SK-N-SH (cell line): ENCODE measurements at regions of chr11 and their contacts with region 1.

Region 1: DNA sequence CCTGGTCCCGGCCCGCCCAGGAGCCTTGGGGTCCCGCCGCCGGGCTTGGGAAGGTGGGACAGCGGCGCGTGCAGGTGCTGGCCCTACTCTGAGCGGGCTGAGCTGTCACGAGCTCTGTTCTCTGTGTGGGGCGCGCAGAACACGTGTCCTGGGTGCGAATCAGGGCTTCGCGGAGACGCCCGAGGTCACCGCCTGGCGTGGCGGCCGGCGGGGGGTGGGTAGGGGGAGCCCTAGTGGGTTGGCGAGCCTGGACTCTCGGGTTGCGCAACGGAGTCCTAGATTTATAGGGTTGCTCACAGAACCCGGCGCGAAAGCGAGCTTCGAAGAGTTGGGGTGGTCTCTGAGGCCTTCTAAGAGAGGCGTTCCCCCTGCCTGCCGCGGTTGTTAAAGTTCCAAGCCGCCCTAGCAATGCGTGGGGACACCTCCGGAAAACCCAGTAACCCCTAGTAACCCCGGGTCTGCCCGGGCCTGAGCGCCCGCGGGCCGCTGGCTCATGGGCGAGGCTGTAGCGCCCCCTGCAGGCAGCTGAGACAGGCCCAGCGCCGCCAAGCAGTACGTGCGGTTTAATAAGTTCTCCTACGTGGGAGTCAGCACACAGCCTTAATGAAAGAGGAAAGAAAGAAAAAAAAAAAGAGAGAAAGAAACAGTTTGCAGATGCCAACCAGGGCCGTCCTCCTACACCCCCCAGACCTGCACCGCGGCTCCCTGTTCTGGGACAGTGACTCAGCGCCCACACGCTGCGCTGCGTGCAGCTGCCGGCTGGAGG is 2.8 kb downstream of the ADM start:
- DNase-seq: peak; percentile 91
- H3K4me3 ChIP-seq: peak overlapping the region; percentile 66 to 87
- H3K27ac ChIP-seq: peak overlapping the region; percentile 75 to 79
- H3K4me1 ChIP-seq: peaks cover 7 to 39% of the 10 kb centered on the region in 2 experiments
- H3K27me3 ChIP-seq: no peaks in the 10 kb centered on the region
- CTCF ChIP-seq: peak; percentile 100
- EP300 ChIP-seq: peak; percentile 18 to 27; a peak in 1 of 4 replicates
- RAD21 ChIP-seq: peak; percentile 84

Region 2: GRCh38 chr11:9748361-9748970 is 559.2 kb before region 1 on chr11:
- CTCF ChIA-PET with region 1: interaction called, 17 read pairs
- POLR2A ChIA-PET with region 1: no interaction called
- DNase-seq: peak; percentile 70
- H3K4me3 ChIP-seq: no peak overlapping the region
- H3K27ac ChIP-seq: 0 out of 4 replicates have a peak overlapping the region, but pooled peaks of 1 of the 2 experiments have one; percentile 6
- H3K4me1 ChIP-seq: peaks cover 5 to 11% of the 10 kb centered on the region in 2 experiments; a peak in 3 of 4 replicates
- H3K27me3 ChIP-seq: no peaks in the 10 kb centered on the region
- CTCF ChIP-seq: peak; percentile 73
- EP300 ChIP-seq: no peak
- RAD21 ChIP-seq: peak; percentile 87

Region 3: DNA sequence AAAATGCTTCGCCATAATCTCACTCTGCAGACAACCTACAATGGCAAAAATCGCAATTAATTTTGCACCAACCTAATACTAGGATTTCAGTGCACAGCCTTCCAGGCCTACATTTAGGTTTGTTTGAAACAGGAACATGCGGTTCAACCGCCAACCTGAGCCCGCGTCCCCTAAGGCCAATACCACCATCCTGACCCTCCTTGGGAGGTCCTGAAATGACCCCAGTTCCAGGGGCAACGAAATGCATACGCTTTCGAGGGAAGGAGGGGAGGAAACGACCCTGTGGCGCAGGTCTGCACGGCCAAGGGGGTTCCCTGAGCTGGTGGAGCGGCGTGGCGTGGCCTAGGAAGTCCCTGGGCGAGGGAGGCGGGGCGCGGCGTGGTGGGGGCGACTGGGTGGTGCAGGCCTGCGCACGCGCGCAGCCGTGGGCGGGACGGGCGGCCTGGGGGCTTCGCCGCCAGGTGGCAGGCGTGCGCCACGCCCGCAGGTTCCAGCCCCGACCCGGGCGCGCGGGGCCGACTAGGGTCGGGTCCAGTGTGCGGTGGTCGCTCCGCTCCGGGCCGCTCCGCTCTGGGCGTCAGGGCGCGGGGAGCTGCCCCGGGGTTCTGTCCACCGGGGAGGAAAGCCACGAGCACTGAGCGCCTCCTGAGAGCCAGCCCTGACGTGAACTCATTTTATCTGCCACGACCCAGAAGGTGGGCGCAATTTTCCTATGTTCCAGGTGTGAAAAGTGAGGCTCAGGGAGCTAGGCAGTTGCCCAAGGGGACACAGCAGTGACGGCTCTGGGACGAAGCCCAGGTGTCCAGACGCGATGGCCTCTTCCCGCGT is 549.6 kb before region 1 on chr11:
- CTCF ChIA-PET with region 1: interaction called, 104 read pairs
- POLR2A ChIA-PET with region 1: interaction called, 24 read pairs
- DNase-seq: peak; percentile 99
- H3K4me3 ChIP-seq: peak overlapping the region; percentile 55 to 64
- H3K27ac ChIP-seq: peak overlapping the region; percentile 91 to 97
- H3K4me1 ChIP-seq: peaks cover 29 to 31% of the 10 kb centered on the region in 2 experiments
- H3K27me3 ChIP-seq: no peaks in the 10 kb centered on the region
- CTCF ChIP-seq: peak; percentile 67
- EP300 ChIP-seq: peak in 1 of 2 experiments; percentile 20; a peak in 1 of 4 replicates
- RAD21 ChIP-seq: peak; percentile 78

Region 4: DNA sequence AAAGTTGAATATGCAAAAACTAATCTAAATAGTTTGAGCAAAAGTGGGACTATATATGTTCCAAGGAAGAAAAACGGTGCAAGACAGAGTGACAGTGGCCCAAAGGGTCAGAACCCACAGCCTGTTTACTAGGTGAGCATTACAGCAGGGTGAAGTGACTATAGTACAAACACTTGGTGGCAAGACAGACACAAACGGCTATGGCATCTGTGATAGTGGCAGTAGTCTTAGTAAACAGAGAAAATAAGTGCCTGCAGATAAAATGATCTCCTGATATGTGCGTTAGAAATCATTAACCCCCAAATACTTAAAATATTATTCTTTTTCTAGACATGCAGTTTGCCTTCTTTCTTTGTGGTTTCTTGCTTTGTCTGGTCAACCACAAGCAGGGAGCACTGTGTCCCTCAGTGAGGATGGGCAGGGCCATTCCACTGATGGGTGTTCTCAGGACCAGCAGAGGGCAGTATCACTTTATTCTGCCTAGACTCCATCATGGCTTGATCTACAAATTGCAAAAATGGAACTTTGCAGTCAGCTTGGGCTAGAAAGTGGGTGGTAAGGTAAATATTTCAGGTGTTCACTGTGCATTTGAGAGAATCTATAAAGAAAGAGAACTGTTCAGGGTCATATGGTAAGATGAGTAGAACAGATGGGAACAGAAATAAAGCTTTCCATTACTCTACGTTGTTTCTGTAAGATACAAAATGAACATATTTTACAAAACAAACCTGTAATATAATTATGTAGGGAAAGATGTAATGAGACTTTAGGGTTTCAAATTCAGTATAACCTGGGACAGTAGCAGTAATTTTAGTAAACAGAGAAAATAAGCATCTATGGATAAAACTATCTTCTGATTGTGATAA is 445.5 kb before region 1 on chr11:
- CTCF ChIA-PET with region 1: interaction called, 10 read pairs
- POLR2A ChIA-PET with region 1: no interaction called
- DNase-seq: peak; percentile 52
- H3K4me3 ChIP-seq: no peak overlapping the region; a peak in 1 of 4 replicates
- H3K27ac ChIP-seq: no peak overlapping the region; a peak in 1 of 4 replicates
- H3K4me1 ChIP-seq: peaks cover 14 to 24% of the 10 kb centered on the region in 2 experiments; a peak in 3 of 4 replicates
- H3K27me3 ChIP-seq: no peaks in the 10 kb centered on the region
- CTCF ChIP-seq: peak; percentile 82
- EP300 ChIP-seq: no peak
- RAD21 ChIP-seq: peak; percentile 84

Region 5: DNA sequence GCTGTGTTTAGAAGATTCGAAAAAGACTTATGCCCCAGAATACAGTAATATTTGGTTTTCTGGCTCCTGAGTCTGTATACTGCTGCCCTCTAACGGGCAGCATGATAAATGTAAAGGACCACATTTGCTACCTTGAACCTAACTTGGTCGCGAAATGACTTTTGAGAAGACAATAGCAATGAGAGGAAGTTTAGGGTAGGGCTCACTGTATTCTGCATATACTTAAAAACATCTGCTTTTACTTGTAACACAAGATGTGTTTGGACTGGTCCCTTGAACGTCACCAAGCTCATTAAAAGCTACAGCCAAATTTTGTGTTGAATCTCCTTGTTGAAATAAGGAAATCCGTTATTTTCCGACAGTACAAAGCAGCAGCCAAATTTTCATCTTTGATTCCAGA is 334.6 kb before region 1 on chr11:
- CTCF ChIA-PET with region 1: interaction called, 21 read pairs
- POLR2A ChIA-PET with region 1: interaction called, 6 read pairs
- DNase-seq: peak; percentile 67
- H3K4me3 ChIP-seq: no peak overlapping the region
- H3K27ac ChIP-seq: no peak overlapping the region; a peak in 1 of 4 replicates
- H3K4me1 ChIP-seq: peaks cover 2 to 4% of the 10 kb centered on the region in 2 experiments; a peak in 2 of 4 replicates
- H3K27me3 ChIP-seq: no peaks in the 10 kb centered on the region
- CTCF ChIP-seq: peak; percentile 88
- EP300 ChIP-seq: no peak
- RAD21 ChIP-seq: peak; percentile 84

Region 6: DNA sequence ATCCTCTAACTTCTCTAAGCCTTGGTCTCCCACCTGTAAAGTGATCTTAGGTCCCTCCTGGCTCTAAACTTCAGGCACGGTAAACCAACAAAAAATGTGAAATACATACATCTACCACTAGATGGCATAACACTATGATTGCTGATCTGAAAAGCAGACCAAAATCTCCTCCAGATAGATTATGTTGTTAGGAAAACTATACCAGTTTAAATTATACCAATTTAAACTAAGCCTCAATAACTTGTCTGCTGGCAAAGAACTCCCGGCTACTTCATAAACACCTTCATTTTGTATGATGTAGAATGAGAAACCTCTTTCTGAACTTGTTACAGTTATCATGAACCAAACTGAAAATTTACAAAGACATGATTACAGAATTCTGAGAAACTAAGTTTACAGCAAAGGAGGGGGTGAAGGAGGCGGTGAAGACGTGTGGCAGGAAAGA is 99.5 kb before region 1 on chr11:
- CTCF ChIA-PET with region 1: interaction called, 78 read pairs
- POLR2A ChIA-PET with region 1: interaction called, 4 read pairs
- DNase-seq: peak; percentile 56
- H3K4me3 ChIP-seq: no peak overlapping the region
- H3K27ac ChIP-seq: no peak overlapping the region; a peak in 1 of 4 replicates
- H3K4me1 ChIP-seq: peaks cover 0 to 2% of the 10 kb centered on the region in 2 experiments; a peak in 2 of 4 replicates
- H3K27me3 ChIP-seq: no peaks in the 10 kb centered on the region
- CTCF ChIP-seq: peak; percentile 76
- EP300 ChIP-seq: no peak
- RAD21 ChIP-seq: peak; percentile 70

Region 7: DNA sequence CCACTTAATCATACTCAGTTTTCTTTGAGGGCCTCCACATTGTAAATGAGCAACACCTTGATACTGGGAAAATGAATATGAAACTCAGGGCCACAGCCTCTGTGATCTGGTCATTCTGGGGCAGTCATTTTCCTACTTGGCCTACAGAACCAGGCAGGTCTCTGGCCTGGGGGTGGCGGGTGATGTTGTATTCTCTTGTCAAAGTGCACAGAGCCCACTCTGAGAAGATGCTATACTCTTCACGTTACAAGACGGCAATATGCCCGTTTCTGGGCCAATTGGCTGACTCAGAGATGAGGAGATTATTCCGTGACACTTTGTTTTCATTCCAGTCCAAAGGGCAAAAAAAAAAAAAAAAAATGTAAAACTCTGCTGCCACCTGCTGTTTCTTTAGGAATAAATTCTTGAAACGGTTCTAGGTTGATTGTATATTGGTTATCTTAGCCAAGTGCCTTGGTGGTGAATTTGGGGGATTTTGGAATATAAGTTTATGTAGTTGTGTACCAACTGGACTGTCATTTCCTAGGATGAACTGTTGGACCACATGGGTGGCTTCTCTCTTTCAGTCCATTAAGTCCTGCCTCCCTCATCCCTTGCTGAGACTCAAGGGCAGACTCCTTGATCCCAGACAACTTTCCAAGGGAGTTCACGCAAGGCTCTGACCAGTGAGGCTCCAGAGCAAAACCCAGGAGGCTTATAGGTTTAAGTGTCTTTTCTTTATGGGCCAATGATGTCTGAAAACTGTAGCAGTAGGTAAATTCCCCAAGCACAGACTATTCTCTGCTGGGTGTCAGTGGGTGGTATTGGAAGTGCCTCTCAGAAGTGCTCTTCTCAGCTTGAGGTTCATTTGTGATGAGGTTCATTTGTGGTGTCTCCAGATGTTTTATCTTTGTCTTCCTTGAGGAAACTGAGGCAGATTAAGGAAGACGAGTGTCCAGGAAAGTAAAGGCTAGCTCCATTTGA is 15.5 kb after region 1 on chr11:
- CTCF ChIA-PET with region 1: interaction called, 52 read pairs
- POLR2A ChIA-PET with region 1: interaction called, 6 read pairs
- DNase-seq: peak; percentile 39
- H3K4me3 ChIP-seq: no peak overlapping the region; a peak in 1 of 4 replicates
- H3K27ac ChIP-seq: peak overlapping the region; percentile 58 to 97
- H3K4me1 ChIP-seq: peaks cover 36% of the 10 kb centered on the region in 2 experiments
- H3K27me3 ChIP-seq: no peaks in the 10 kb centered on the region
- CTCF ChIP-seq: peak; percentile 71
- EP300 ChIP-seq: peak; percentile 9 to 69; a peak in 1 of 4 replicates
- RAD21 ChIP-seq: peak; percentile 82

Region 8: GRCh38 chr11:10366568-10367370 is 59.1 kb after region 1 on chr11:
- CTCF ChIA-PET with region 1: no interaction called
- POLR2A ChIA-PET with region 1: no interaction called
- DNase-seq: peak; percentile 39
- H3K4me3 ChIP-seq: no peak overlapping the region
- H3K27ac ChIP-seq: no peak overlapping the region; a peak in 1 of 4 replicates
- H3K4me1 ChIP-seq: peaks cover 0 to 8% of the 10 kb centered on the region in 2 experiments; a peak in 1 of 4 replicates
- H3K27me3 ChIP-seq: no peaks in the 10 kb centered on the region
- CTCF ChIP-seq: peak; percentile 72
- EP300 ChIP-seq: 0 out of 4 replicates have a peak, but pooled peaks of 1 of the 2 experiments have one; percentile 5
- RAD21 ChIP-seq: peak; percentile 73